ENCODE measurements at regions of chr18 and their contacts with region 1.

Region 1: GRCh38 chr18:10499230-10499629 is 26.6 kb upstream of the NAPG start:
- DNase-seq: no peak
- H3K4me3 Mint-ChIP-seq: no peak overlapping the region
- H3K27ac Mint-ChIP-seq: no peak overlapping the region
- H3K4me1 Mint-ChIP-seq: peaks cover 5% of the 10 kb centered on the region
- H3K27me3 Mint-ChIP-seq: peaks cover 39% of the 10 kb centered on the region

Region 2: DNA sequence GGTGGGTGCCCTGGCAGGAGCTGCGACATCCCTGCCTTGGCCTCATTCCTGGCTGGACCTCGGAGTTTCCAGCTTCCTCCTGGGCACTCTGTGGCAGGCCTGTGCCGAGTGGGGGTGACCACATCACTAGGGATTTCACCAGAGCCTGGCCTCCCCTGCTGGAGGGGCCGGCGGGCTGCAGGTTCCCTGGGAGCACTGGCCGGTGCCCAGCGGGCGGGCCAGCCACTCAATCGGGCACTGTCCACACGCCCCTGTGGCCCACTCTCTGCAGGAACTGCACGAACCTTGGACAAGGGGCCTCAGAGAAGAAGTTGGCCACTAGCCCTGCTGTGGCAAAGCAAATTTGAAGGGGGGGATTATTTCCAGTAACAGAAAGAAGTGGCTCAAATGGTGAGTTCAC is 155.5 kb before region 1 on chr18:
- intact Hi-C with region 1: no loop called
- DNase-seq: no peak
- H3K4me3 Mint-ChIP-seq: no peak overlapping the region
- H3K27ac Mint-ChIP-seq: no peak overlapping the region
- H3K4me1 Mint-ChIP-seq: no peaks in the 10 kb centered on the region
- H3K27me3 Mint-ChIP-seq: no peaks in the 10 kb centered on the region

Region 3: GRCh38 chr18:10519999-10520935 is 21.0 kb after region 1 on chr18:
- intact Hi-C with region 1: loop called (anchors 2 kb)
- DNase-seq: peak; percentile 87
- H3K4me3 Mint-ChIP-seq: no peak overlapping the region
- H3K27ac Mint-ChIP-seq: no peak overlapping the region
- H3K4me1 Mint-ChIP-seq: peaks cover 17% of the 10 kb centered on the region
- H3K27me3 Mint-ChIP-seq: peaks cover 36% of the 10 kb centered on the region